WTC11 (cell line): ENCODE measurements at regions of chr4 and their contacts with region 1.

Region 1: DNA sequence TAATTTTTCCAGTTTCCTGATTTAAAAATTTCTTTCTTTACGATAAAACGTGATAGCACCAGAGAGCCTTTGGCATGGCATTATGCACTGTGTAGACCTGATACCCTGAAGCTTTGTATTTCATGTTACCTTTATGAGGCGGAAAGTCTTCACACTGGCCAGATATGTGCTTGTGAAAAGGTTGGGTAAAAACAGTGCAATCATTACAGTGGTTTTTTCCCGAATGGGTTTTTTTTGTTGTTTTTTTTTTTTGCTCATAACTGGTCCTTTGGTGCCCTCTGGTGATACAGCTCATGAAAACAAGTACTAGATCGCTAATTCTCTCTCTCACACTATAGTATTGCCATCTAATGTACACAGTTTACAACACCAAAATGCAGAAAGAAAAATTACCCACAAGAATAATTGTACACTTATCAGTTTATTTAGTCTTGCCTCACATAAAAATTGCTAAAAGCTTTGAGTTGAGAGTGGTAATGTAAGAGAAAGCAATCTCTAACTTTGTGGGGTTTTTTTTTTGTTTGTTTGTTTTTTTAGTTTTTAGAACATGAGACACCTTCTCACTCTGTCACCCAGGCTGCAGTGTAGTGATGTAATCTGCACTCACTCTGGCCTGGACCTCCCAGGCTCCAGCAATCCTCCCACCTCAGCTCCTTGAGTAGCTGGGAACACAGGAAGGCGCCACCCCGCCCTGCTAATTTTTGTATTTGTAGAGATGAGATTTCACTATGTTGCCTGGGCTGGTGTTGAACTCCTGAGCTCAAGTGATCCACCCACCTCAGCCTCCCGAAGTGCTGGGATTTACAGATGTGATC is 21.3 kb downstream of the SPCS3 start:
- DNase-seq: no peak
- ATAC-seq: peak; percentile 72
- H3K4me3 Mint-ChIP-seq: no peak overlapping the region
- H3K27ac Mint-ChIP-seq: no peak overlapping the region
- H3K4me1 Mint-ChIP-seq: peaks cover 11% of the 10 kb centered on the region
- H3K27me3 Mint-ChIP-seq: no peaks in the 10 kb centered on the region; the same call in 1 of the 2 replicates
- CTCF ChIP-seq: peak; percentile 51

Region 2: DNA sequence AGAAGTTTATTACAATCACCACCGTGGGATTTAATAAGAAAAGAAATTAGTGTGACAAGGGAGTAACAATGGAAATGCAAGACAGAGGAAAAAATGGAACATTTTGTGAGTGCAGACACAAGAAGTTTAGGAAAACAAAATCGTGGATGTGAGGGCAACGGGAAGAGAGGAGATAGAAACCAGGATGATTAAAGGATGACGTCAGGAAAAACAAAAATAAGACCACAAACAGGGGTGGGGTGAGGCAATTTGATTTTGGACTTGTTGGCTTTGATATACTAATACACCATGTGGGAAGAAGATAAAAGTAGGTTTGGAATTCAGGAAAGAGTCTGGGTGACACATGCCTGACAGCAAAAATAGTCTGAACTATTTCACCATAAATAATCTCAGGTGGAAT is 490.8 kb before region 1 on chr4:
- CTCF ChIA-PET with region 1: no interaction called
- POLR2A ChIA-PET with region 1: no interaction called
- DNase-seq: no peak
- ATAC-seq: no peak
- H3K4me3 Mint-ChIP-seq: no peak overlapping the region
- H3K27ac Mint-ChIP-seq: no peak overlapping the region
- H3K4me1 Mint-ChIP-seq: peaks cover 4% of the 10 kb centered on the region
- H3K27me3 Mint-ChIP-seq: no peaks in the 10 kb centered on the region
- CTCF ChIP-seq: no peak

Region 3: DNA sequence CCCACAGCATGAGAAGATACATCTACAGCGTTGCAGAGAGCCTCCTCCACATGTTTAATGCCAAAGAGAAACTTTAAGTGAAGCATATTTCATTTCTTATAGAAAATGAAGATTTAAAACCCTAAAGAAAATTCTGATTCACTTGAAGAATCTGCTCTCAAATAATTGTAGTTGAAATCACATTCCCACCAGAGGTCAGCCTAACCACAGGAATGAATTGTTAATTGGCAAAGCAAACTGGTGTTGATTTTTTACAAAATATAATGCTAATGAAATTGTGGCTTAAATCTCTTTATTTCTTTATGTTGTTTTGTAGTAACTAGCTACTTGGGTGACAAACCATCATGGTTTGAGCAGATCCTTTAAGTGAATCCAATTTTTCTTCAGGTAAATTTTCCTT is 306.6 kb before region 1 on chr4:
- CTCF ChIA-PET with region 1: interaction called, 18 read pairs
- POLR2A ChIA-PET with region 1: no interaction called
- DNase-seq: no peak
- ATAC-seq: no peak
- H3K4me3 Mint-ChIP-seq: no peak overlapping the region
- H3K27ac Mint-ChIP-seq: no peak overlapping the region
- H3K4me1 Mint-ChIP-seq: no peaks in the 10 kb centered on the region
- H3K27me3 Mint-ChIP-seq: no peaks in the 10 kb centered on the region
- CTCF ChIP-seq: 0 out of 2 replicates have a peak, but pooled peaks have one; percentile 13

Region 4: DNA sequence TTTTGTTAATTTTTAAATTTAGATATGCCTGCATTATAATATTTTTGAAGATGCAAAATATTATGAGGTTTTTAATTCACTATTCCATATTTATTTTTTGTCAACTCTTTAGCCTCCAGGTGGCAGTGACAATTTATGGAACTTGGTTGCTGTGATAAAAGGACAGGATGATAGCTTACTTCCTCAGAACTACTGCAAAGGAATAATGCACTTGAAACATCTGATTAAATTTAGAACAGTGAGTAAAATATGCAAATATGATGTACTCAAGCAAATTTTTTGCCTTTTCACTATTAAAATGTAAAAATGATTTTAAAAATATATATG is 190.8 kb before region 1 on chr4:
- CTCF ChIA-PET with region 1: interaction called, 11 read pairs
- POLR2A ChIA-PET with region 1: no interaction called
- DNase-seq: no peak
- ATAC-seq: no peak
- H3K4me3 Mint-ChIP-seq: no peak overlapping the region
- H3K27ac Mint-ChIP-seq: no peak overlapping the region
- H3K4me1 Mint-ChIP-seq: no peaks in the 10 kb centered on the region
- H3K27me3 Mint-ChIP-seq: no peaks in the 10 kb centered on the region
- CTCF ChIP-seq: no peak